ENCODE measurements at regions of chr11 and their contacts with region 1.

Region 1: GRCh38 chr11:67468835-67469811 is at the start of gene TMEM134:
- DNase-seq: peak; percentile 88
- H3K4me3 Mint-ChIP-seq: peak within 1 kb of the TSS; percentile 95
- H3K27ac Mint-ChIP-seq: peak within 1 kb of the TSS; percentile 79
- H3K4me1 Mint-ChIP-seq: peaks cover 14% of the 10 kb centered on the region
- H3K27me3 Mint-ChIP-seq: no peaks in the 10 kb centered on the region
- CTCF ChIP-seq: peak; percentile 19
- total RNA-seq, gene TMEM134: 49.7 and 50.1 TPM in 2 replicates

Region 2: DNA sequence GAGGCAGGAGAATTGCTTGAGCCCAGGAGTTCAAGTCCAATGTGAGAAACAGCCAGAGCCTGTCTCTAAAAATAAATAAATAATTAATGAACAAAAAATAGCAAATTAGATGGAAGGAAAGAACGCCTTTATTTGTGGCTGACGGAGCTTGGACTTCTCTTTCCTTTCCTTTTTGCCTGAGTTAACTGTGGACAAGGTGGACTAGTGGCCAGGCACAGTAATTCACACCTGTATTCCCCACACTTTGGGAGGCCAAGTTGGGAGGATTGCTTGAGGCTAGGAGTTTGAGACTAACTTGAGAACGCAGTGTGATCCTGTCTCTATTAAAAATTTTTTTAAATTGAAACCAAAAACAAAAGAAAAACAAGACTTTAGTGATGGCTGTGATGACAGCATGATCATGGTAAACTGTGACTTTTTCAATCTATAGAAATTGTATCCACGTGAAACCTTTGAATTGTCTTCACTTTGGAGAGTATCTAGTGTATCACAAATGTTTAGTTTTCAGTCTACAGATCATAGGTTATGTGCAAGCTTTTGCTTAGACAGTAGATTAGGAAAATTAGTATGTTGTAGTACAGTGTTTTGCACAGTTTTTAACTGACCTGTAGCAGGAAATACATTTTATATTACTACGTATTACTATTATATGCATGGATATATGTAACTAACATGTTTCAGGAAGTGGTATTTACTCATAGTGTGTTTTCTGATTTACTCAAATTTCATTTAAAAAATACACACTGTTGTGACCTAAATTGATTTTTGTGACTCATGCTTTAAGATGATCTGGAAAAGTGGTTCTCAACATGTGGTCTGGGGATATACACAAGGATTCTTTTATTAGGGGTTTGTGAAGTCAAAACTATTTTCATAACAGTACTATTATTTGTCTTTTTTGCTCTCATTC is 308.0 kb before region 1 on chr11:
- CTCF ChIA-PET with region 1: no interaction called
- POLR2A ChIA-PET with region 1: no interaction called
- intact Hi-C with region 1: no loop called
- DNase-seq: peak; percentile 11
- H3K4me3 Mint-ChIP-seq: no peak overlapping the region
- H3K27ac Mint-ChIP-seq: no peak overlapping the region
- H3K4me1 Mint-ChIP-seq: peaks cover 28% of the 10 kb centered on the region
- H3K27me3 Mint-ChIP-seq: no peaks in the 10 kb centered on the region
- CTCF ChIP-seq: no peak

Region 3: GRCh38 chr11:67391304-67392132 is 77.6 kb before region 1 on chr11 and contains the start of gene RAD9A:
- CTCF ChIA-PET with region 1: no interaction called
- POLR2A ChIA-PET with region 1: interaction called, 11 read pairs
- intact Hi-C with region 1: no loop called
- DNase-seq: peak; percentile 92
- H3K4me3 Mint-ChIP-seq: peak within 1 kb of the TSS; percentile 85
- H3K27ac Mint-ChIP-seq: peak within 1 kb of the TSS; percentile 76
- H3K4me1 Mint-ChIP-seq: peaks cover 17% of the 10 kb centered on the region
- H3K27me3 Mint-ChIP-seq: no peaks in the 10 kb centered on the region
- CTCF ChIP-seq: no peak
- total RNA-seq, gene RAD9A: 9.9 and 18.3 TPM in 2 replicates

Region 4: GRCh38 chr11:67420646-67421420 is 48.3 kb before region 1 on chr11:
- CTCF ChIA-PET with region 1: interaction called, 3 read pairs
- POLR2A ChIA-PET with region 1: interaction called, 15 read pairs
- intact Hi-C with region 1: no loop called
- DNase-seq: peak; percentile 94
- H3K4me3 Mint-ChIP-seq: peak overlapping the region; percentile 74
- H3K27ac Mint-ChIP-seq: no peak overlapping the region
- H3K4me1 Mint-ChIP-seq: peaks cover 20% of the 10 kb centered on the region
- H3K27me3 Mint-ChIP-seq: no peaks in the 10 kb centered on the region
- CTCF ChIP-seq: no peak

Region 5: DNA sequence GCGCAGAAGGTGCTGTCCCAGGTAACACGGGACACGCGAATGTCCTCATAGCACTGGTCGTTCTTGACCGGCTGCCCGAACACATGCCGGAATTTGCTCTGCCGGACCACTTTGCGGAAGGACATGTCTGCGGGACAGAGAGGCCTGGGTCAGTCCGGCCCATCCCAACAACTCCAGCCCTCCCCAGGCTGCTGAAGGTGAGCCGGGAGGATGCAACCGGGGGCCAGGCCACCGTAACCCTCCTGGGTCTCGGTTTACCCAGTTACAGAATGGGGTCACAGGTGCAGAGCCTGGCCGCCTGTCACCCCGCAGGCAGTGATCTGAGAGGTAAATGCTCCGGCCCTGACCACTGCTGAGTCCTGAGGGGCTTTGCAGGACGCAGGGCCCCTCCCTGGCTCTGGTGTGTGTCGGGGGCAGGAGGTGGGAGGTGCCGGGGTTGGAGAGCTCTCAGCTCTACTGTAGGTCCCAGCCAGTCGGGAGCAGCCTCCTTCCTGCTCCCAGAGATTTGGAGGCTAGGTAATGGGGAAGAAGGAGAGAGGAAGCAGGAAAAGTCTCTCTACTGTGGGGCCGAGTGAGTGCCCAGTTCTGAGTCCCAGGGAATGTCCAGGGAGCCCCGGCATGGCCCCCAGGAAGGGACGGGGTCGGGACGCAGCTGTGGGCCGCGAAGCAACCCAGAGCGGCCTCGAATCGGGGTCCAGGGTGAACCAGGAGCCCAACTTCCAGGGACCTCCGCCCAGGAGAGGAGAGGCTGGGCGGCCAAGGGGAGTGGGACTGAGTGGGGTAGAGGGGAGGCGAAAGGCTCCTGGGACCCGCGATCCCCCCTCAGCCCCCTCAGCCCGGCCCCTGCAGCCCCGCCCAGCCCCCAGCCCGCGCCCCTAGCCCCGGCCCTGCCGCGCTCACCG is 26.4 kb before region 1 on chr11:
- CTCF ChIA-PET with region 1: interaction called, 3 read pairs
- POLR2A ChIA-PET with region 1: interaction called, 10 read pairs
- intact Hi-C with region 1: loop called (anchors 1 kb)
- DNase-seq: no peak
- H3K4me3 Mint-ChIP-seq: peak overlapping the region; percentile 82
- H3K27ac Mint-ChIP-seq: peak overlapping the region; percentile 63
- H3K4me1 Mint-ChIP-seq: peaks cover 17% of the 10 kb centered on the region
- H3K27me3 Mint-ChIP-seq: no peaks in the 10 kb centered on the region
- CTCF ChIP-seq: no peak

Region 6: DNA sequence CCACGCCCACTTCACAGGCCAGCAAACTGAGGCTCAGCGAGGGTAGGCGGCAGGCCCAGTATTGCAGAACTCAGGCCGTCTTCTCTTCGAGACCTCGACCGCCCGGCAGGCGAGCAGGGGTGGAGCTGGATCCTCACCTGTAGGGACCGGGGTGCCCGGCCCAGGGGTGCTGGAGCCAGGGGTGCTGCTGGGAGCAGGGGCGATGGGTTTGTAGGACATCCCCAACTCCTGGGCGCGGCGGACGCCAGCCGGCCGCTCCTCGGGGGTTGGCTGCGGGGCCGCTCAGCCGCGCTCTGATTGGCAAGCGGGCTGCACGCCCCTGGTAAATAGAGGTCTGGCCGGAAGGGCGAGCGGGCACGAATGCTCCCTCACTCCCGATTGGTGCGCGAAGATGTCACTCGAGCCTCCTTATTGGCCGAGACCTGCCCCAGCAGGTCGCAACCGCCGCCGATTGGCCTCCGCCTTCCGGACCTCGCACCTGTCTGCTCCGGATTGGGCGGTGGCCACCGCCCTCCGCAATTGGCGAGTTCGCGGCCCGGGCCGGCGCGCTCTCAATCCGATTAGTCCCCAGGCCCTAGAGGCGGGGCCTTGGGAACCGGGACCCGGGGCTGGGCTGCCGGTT is 38.9 kb after region 1 on chr11 and contains the start of gene CDK2AP2:
- CTCF ChIA-PET with region 1: interaction called, 8 read pairs
- POLR2A ChIA-PET with region 1: interaction called, 22 read pairs
- intact Hi-C with region 1: loop called (anchors 1 kb)
- DNase-seq: peak; percentile 99
- H3K4me3 Mint-ChIP-seq: peak within 1 kb of the TSS; percentile 92
- H3K27ac Mint-ChIP-seq: peak within 1 kb of the TSS; percentile 89
- H3K4me1 Mint-ChIP-seq: peaks cover 20% of the 10 kb centered on the region
- H3K27me3 Mint-ChIP-seq: no peaks in the 10 kb centered on the region
- CTCF ChIP-seq: no peak
- total RNA-seq, gene CDK2AP2: 93.7 and 136 TPM in 2 replicates

Measured in MCF 10A (cell line).